Mammary epithelial cell (primary cell): ENCODE measurements at regions of chr2 and their contacts with region 1.

Region 1: GRCh38 chr2:88451811-88452565 is 505 bp downstream of the FOXI3 start:
- DNase-seq: peak; percentile 26
- H3K4me3 ChIP-seq: peak overlapping the region; percentile 7 to 60 (median 44)
- H3K27ac ChIP-seq: no peak overlapping the region
- H3K4me1 ChIP-seq: peaks cover 13% of the 10 kb centered on the region
- H3K27me3 ChIP-seq: peaks cover 3% of the 10 kb centered on the region
- CTCF ChIP-seq: no peak

Region 2: DNA sequence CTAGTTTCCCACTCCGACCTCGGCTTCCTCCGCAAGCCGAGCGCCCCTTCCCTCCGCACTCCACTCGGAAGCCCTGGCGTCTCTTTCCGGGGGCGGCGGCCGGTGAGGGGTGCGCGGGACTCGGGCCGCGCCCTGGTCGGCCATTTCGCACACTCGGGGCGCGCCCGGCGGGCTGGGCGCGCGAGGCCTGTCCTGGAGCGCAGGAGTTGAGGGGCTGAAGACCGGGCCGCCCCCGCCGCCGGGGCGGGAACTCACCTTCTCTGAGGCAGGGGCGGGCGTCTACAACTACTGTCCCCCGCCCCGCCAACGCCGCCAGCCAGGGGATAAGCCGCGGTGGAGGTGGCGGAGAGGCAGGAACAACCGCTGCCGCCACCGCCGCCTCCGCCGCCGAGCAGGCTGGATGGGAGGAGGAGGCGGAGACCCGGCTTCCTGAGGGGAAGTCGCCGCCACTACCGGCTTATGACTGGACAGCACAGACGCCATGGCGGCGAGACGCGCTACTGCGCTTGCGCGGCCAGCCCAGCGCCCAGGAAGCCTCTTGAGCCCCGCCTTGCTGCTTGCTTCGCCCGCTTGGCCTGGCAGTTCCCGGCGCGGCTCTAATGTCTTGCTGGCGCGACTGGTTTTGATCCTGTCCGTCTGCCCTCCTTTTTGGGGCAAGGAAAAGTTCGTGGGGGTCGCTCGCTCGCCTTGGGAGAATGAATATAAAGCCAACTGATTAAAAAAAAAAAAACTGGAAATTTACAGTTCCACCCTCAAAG is 396.4 kb before region 1 on chr2 and contains the start of gene KRCC1:
- CTCF ChIA-PET with region 1: no interaction called
- dilution Hi-C with region 1: no loop called
- in situ Hi-C with region 1: no loop called
- intact Hi-C with region 1: loop called (anchors 1 kb)
- DNase-seq: peak; percentile 95
- H3K4me3 ChIP-seq: peak within 1 kb of the TSS; percentile 79 to 91 (median 79)
- H3K27ac ChIP-seq: peak within 1 kb of the TSS; percentile 88
- H3K4me1 ChIP-seq: peaks cover 19% of the 10 kb centered on the region
- H3K27me3 ChIP-seq: no peaks in the 10 kb centered on the region
- CTCF ChIP-seq: no peak
- total RNA-seq, gene KRCC1: 12.7 to 24.5 TPM

Region 3: GRCh38 chr2:88307817-88308216 is 144.2 kb before region 1 on chr2:
- CTCF ChIA-PET with region 1: interaction called, 5 read pairs
- dilution Hi-C with region 1: no loop called
- in situ Hi-C with region 1: no loop called
- intact Hi-C with region 1: loop called (anchors 5 kb)
- DNase-seq: peak; percentile 29
- H3K4me3 ChIP-seq: no peak overlapping the region
- H3K27ac ChIP-seq: no peak overlapping the region
- H3K4me1 ChIP-seq: no peaks in the 10 kb centered on the region
- H3K27me3 ChIP-seq: no peaks in the 10 kb centered on the region
- CTCF ChIP-seq: peak; percentile 51 to 71

Region 4: GRCh38 chr2:88350331-88351248 is 101.4 kb before region 1 on chr2:
- CTCF ChIA-PET with region 1: no interaction called
- dilution Hi-C with region 1: no loop called
- in situ Hi-C with region 1: no loop called
- intact Hi-C with region 1: loop called (anchors 2 kb)
- DNase-seq: peak; percentile 47
- H3K4me3 ChIP-seq: peak overlapping the region; percentile 25 to 48 (median 39)
- H3K27ac ChIP-seq: no peak overlapping the region
- H3K4me1 ChIP-seq: peaks cover 9% of the 10 kb centered on the region
- H3K27me3 ChIP-seq: no peaks in the 10 kb centered on the region
- CTCF ChIP-seq: peak; percentile 78 to 90

Region 5: DNA sequence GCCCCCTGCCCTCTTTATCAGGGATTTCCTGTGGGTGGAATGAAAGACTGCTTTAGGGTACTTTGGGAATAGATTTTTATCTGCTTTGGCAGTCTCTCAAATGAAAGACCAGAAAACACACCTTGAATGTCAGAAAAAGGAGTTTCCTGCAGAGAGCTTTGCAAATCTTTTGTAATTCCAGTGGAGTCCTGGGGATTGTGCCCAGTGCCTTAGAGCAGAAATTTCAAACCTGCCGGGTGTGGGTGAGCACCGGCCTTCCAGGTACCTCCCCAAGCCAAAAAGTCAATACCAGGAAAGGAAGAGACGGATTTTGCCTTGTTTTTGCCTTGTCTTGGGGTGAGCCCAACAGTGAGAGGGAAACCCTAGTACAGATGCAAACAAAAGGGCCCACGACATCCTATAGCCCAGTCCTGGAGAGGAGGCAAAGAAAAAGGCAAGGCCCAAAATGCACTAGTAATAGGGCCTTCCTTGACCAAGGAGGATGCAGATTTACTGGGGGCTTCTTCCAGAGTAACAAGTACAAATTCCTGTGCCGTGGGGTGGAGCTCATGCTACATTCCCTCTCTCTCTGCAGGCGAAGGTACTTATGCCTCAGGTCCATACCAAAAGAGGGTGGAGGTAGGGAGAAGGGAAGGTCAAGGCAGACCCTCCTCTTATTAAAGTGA is 35.8 kb before region 1 on chr2:
- CTCF ChIA-PET with region 1: no interaction called
- dilution Hi-C with region 1: no loop called
- in situ Hi-C with region 1: no loop called
- intact Hi-C with region 1: no loop called
- DNase-seq: no peak
- H3K4me3 ChIP-seq: no peak overlapping the region
- H3K27ac ChIP-seq: no peak overlapping the region
- H3K4me1 ChIP-seq: no peaks in the 10 kb centered on the region
- H3K27me3 ChIP-seq: peaks cover 3% of the 10 kb centered on the region
- CTCF ChIP-seq: no peak

Region 6: GRCh38 chr2:88481691-88482338 is 29.8 kb after region 1 on chr2:
- CTCF ChIA-PET with region 1: no interaction called
- dilution Hi-C with region 1: no loop called
- in situ Hi-C with region 1: no loop called
- intact Hi-C with region 1: no loop called
- DNase-seq: peak; percentile 49
- H3K4me3 ChIP-seq: no peak overlapping the region
- H3K27ac ChIP-seq: no peak overlapping the region
- H3K4me1 ChIP-seq: no peaks in the 10 kb centered on the region
- H3K27me3 ChIP-seq: no peaks in the 10 kb centered on the region
- CTCF ChIP-seq: no peak

Region 7: DNA sequence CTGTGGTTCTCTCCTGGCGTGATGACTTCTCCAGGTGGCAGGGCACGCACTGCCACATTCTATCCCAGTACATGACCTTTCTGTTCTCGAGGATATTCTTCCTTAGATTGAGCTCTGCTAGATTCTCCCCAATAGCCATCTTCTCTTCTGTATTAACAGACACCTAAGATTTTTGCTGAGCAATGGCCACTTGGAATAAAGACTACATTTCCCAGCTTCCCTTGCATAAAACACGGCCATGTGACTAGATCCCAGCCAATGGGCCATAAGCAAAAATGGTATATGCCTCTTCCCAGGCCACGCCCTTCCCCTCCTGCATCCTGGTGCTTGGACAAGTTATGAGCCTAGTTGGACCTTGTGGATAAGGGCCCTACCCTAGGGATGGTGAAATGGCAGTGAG is 93.1 kb after region 1 on chr2:
- CTCF ChIA-PET with region 1: no interaction called
- dilution Hi-C with region 1: no loop called
- in situ Hi-C with region 1: no loop called
- intact Hi-C with region 1: loop called (anchors 10 kb)
- DNase-seq: peak; percentile 38
- H3K4me3 ChIP-seq: no peak overlapping the region
- H3K27ac ChIP-seq: no peak overlapping the region
- H3K4me1 ChIP-seq: peaks cover 6% of the 10 kb centered on the region
- H3K27me3 ChIP-seq: no peaks in the 10 kb centered on the region
- CTCF ChIP-seq: no peak